Panc1 (cell line): ENCODE measurements at regions of chr11 and their contacts with region 1.

Region 1: DNA sequence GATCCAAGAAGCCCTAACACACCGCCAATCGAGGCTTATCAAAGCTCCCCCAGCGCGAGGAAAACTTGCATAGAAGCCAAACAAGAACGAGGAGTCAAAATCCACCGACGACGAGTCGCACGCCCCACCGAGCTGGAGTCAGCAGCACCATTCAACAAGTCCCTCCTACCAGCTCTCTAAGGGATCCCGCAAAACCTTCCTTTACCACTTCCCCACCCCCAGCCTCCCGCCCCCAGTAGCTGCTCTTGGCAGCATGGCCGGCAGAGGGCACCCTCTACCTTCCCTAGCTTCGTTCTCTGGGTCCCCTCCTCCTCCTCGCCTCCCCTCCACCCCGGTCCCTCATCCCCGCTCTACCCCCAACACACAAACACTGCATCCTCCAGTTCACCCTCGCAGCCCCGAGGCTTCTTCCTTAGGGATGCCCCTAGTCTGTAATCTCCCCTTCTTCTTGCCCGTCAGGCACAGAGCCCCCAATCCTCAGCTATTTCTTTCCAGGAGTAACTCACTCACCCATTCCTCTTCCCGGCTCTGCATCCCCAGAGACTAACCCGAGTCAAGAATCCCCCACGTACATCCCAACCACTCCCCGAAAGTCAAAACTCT is 1.3 kb downstream of the BDNF start:
- DNase-seq: no peak
- ATAC-seq: peak; percentile 88
- H3K4me3 ChIP-seq: peak overlapping the region; percentile 48 to 66
- H3K27ac ChIP-seq: no peak overlapping the region
- H3K4me1 ChIP-seq: peaks cover 12% of the 10 kb centered on the region
- H3K27me3 ChIP-seq: peaks cover 15% of the 10 kb centered on the region
- CTCF ChIP-seq: peak; percentile 94

Region 2: DNA sequence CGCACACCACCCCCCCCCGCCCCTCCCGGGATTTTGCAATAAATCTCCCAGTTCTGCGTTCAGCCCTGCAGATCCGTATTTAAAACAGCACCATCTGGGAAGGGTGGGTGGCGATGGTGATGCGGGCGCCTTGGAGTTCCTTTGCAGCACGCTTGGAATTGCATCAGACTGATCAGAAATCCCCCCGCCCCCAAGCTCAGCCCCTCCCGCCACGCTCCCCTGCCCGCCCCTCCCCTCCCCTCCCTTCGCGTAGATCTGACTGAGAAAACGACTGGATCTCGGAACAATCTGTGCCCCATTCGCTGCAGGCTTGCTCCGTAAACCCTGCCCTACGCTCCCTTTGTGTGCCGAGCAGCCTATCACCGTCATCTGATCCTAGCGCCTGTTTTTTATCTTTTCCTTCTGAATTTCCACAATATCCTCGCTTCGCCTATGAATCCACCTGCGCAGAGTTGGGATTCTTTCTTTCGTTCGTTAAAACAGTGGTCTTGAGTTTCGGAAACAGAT is 19.4 kb after region 1 on chr11:
- CTCF ChIA-PET with region 1: interaction called, 13 read pairs
- POLR2A ChIA-PET with region 1: no interaction called
- in situ Hi-C with region 1: no loop called
- intact Hi-C with region 1: no loop called
- DNase-seq: no peak
- ATAC-seq: peak; percentile 78
- H3K4me3 ChIP-seq: peak overlapping the region; percentile 66 to 92
- H3K27ac ChIP-seq: peak overlapping the region; percentile 75; the same call in 1 of the 2 replicates
- H3K4me1 ChIP-seq: peaks cover 8% of the 10 kb centered on the region
- H3K27me3 ChIP-seq: peaks cover 39% of the 10 kb centered on the region
- CTCF ChIP-seq: no peak

Region 3: GRCh38 chr11:27795955-27796861 is 97.2 kb after region 1 on chr11:
- CTCF ChIA-PET with region 1: no interaction called
- POLR2A ChIA-PET with region 1: no interaction called
- in situ Hi-C with region 1: no loop called
- intact Hi-C with region 1: no loop called
- DNase-seq: no peak
- ATAC-seq: peak; percentile 65; the same call in 1 of the 2 replicates
- H3K4me3 ChIP-seq: no peak overlapping the region
- H3K27ac ChIP-seq: no peak overlapping the region
- H3K4me1 ChIP-seq: 0 out of 2 replicates have a peak, but pooled peaks cover 3% of the 10 kb centered on the region
- H3K27me3 ChIP-seq: no peaks in the 10 kb centered on the region
- CTCF ChIP-seq: no peak

Region 4: GRCh38 chr11:28529540-28530410 is 830.8 kb after region 1 on chr11:
- CTCF ChIA-PET with region 1: interaction called, 8 read pairs
- POLR2A ChIA-PET with region 1: interaction called, 8 read pairs
- in situ Hi-C with region 1: no loop called
- intact Hi-C with region 1: loop called (anchors 5 kb)
- DNase-seq: no peak
- ATAC-seq: peak; percentile 56; the same call in 1 of the 2 replicates
- H3K4me3 ChIP-seq: no peak overlapping the region
- H3K27ac ChIP-seq: no peak overlapping the region
- H3K4me1 ChIP-seq: no peaks in the 10 kb centered on the region
- H3K27me3 ChIP-seq: no peaks in the 10 kb centered on the region
- CTCF ChIP-seq: peak; percentile 37; the same call in 1 of the 2 replicates

Region 5: GRCh38 chr11:28820296-28820989 is 1121.5 kb after region 1 on chr11:
- CTCF ChIA-PET with region 1: interaction called, 20 read pairs
- POLR2A ChIA-PET with region 1: no interaction called
- in situ Hi-C with region 1: no loop called
- intact Hi-C with region 1: no loop called
- DNase-seq: no peak
- ATAC-seq: no peak
- H3K4me3 ChIP-seq: no peak overlapping the region
- H3K27ac ChIP-seq: no peak overlapping the region
- H3K4me1 ChIP-seq: no peaks in the 10 kb centered on the region
- H3K27me3 ChIP-seq: no peaks in the 10 kb centered on the region
- CTCF ChIP-seq: no peak

Region 6: GRCh38 chr11:29159552-29160465 is 1460.8 kb after region 1 on chr11:
- CTCF ChIA-PET with region 1: interaction called, 5 read pairs
- POLR2A ChIA-PET with region 1: no interaction called
- in situ Hi-C with region 1: no loop called
- intact Hi-C with region 1: loop called (anchors 5 kb)
- DNase-seq: peak; percentile 17
- ATAC-seq: peak; percentile 84
- H3K4me3 ChIP-seq: no peak overlapping the region
- H3K27ac ChIP-seq: no peak overlapping the region
- H3K4me1 ChIP-seq: no peaks in the 10 kb centered on the region
- H3K27me3 ChIP-seq: no peaks in the 10 kb centered on the region
- CTCF ChIP-seq: peak; percentile 79